ENCODE measurements at regions of chr15 and their contacts with region 1.

Region 1: GRCh38 chr15:31128919-31129768 is 27.6 kb upstream of the TRPM1 start:
- DNase-seq: peak; percentile 88
- ATAC-seq: peak; percentile 91
- H3K4me3 Mint-ChIP-seq: no peak overlapping the region
- H3K27ac Mint-ChIP-seq: no peak overlapping the region
- H3K4me1 Mint-ChIP-seq: peaks cover 4% of the 10 kb centered on the region; the same call in 1 of the 2 replicates
- H3K27me3 Mint-ChIP-seq: no peaks in the 10 kb centered on the region
- CTCF ChIP-seq: peak; percentile 95

Region 2: GRCh38 chr15:30895461-30896210 is 233.5 kb before region 1 on chr15:
- CTCF ChIA-PET with region 1: interaction called, 14 read pairs
- POLR2A ChIA-PET with region 1: no interaction called
- DNase-seq: no peak
- ATAC-seq: no peak
- H3K4me3 Mint-ChIP-seq: no peak overlapping the region
- H3K27ac Mint-ChIP-seq: no peak overlapping the region; the same call in 1 of the 2 replicates
- H3K4me1 Mint-ChIP-seq: peaks cover 17% of the 10 kb centered on the region
- H3K27me3 Mint-ChIP-seq: no peaks in the 10 kb centered on the region
- CTCF ChIP-seq: no peak

Region 3: DNA sequence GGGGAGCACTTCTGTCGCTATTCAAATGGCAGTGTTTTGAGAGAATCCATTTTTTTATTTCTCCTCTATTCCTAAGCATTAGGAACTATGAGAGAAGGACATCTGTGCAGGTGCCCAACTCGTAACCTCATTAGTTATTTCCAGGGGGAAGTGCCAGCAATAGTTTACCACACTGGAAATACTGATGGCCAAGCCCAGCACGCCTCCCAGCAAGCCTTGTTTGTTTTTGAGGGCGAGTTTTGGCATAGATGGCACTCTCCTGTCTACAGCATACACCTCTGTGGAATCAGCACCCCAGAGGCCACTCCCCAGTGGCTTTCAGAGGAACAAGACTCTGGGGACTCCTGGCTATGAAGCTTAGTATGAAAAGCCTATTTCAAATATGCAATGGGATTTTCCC is 188.8 kb before region 1 on chr15:
- CTCF ChIA-PET with region 1: interaction called, 23 read pairs
- POLR2A ChIA-PET with region 1: no interaction called
- DNase-seq: no peak
- ATAC-seq: no peak
- H3K4me3 Mint-ChIP-seq: no peak overlapping the region
- H3K27ac Mint-ChIP-seq: no peak overlapping the region
- H3K4me1 Mint-ChIP-seq: no peaks in the 10 kb centered on the region
- H3K27me3 Mint-ChIP-seq: no peaks in the 10 kb centered on the region
- CTCF ChIP-seq: no peak

Region 4: DNA sequence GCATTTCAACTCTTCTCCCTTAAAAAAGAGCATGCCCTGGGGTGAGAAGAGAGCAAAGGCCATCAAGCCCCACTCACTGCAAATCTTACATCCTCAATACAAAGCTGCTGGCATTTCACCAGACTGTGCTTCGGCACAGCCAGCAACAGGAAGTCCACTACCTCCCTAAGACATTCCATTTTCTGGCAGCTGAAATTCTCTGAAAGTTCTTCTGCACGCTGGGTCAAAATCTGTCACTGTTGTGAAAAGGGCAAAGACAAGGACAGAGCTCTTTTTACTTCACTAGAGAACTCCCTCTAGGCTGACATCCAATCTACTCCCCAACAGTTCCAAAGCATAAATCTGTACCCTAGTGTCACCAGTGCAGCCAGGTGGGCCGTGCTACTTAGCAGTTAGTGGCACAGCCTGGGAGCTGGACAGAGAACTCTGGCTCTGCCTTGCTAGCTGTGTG is 144.0 kb before region 1 on chr15:
- CTCF ChIA-PET with region 1: interaction called, 17 read pairs
- POLR2A ChIA-PET with region 1: no interaction called
- DNase-seq: no peak
- ATAC-seq: no peak
- H3K4me3 Mint-ChIP-seq: no peak overlapping the region
- H3K27ac Mint-ChIP-seq: peak overlapping the region; percentile 13; the same call in 1 of the 2 replicates
- H3K4me1 Mint-ChIP-seq: peaks cover 25% of the 10 kb centered on the region
- H3K27me3 Mint-ChIP-seq: no peaks in the 10 kb centered on the region
- CTCF ChIP-seq: no peak

Region 5: DNA sequence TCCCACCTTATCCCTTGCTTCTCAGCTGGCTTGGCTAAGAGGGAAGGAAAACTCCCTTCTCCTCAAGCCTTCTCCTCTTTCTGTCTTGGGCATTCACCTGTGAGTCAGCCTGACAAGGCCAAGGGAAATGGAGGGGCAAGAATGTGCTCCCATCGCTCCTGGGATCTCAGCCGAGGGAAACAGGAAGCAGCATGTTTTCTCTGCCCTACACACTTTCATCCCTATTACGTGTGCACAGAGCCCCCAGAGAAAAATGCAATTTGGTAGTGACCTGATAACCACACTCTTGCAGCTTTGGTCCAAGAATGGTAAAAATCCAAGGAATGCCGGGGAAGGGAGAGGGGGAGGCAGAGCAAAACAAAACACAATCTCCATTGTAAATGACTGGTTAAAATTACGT is 104.8 kb before region 1 on chr15:
- CTCF ChIA-PET with region 1: interaction called, 20 read pairs
- POLR2A ChIA-PET with region 1: no interaction called
- DNase-seq: peak; percentile 28
- ATAC-seq: peak; percentile 78
- H3K4me3 Mint-ChIP-seq: no peak overlapping the region
- H3K27ac Mint-ChIP-seq: peak overlapping the region; percentile 96
- H3K4me1 Mint-ChIP-seq: peaks cover 33% of the 10 kb centered on the region
- H3K27me3 Mint-ChIP-seq: no peaks in the 10 kb centered on the region
- CTCF ChIP-seq: no peak

Region 6: GRCh38 chr15:31069360-31070000 is 59.7 kb before region 1 on chr15:
- CTCF ChIA-PET with region 1: no interaction called
- POLR2A ChIA-PET with region 1: no interaction called
- DNase-seq: no peak
- ATAC-seq: no peak
- H3K4me3 Mint-ChIP-seq: no peak overlapping the region
- H3K27ac Mint-ChIP-seq: no peak overlapping the region
- H3K4me1 Mint-ChIP-seq: peaks cover 9% of the 10 kb centered on the region
- H3K27me3 Mint-ChIP-seq: no peaks in the 10 kb centered on the region
- CTCF ChIP-seq: no peak

Region 7: GRCh38 chr15:31116423-31117030 is 12.6 kb before region 1 on chr15:
- CTCF ChIA-PET with region 1: interaction called, 25 read pairs
- POLR2A ChIA-PET with region 1: no interaction called
- DNase-seq: no peak
- ATAC-seq: no peak
- H3K4me3 Mint-ChIP-seq: no peak overlapping the region
- H3K27ac Mint-ChIP-seq: no peak overlapping the region
- H3K4me1 Mint-ChIP-seq: no peaks in the 10 kb centered on the region
- H3K27me3 Mint-ChIP-seq: no peaks in the 10 kb centered on the region
- CTCF ChIP-seq: no peak

Region 8: GRCh38 chr15:31488426-31489204 is 359.5 kb after region 1 on chr15:
- CTCF ChIA-PET with region 1: interaction called, 10 read pairs
- POLR2A ChIA-PET with region 1: no interaction called
- DNase-seq: peak; percentile 53
- ATAC-seq: peak; percentile 76
- H3K4me3 Mint-ChIP-seq: no peak overlapping the region
- H3K27ac Mint-ChIP-seq: no peak overlapping the region
- H3K4me1 Mint-ChIP-seq: peaks cover 5% of the 10 kb centered on the region; the same call in 1 of the 2 replicates
- H3K27me3 Mint-ChIP-seq: peaks cover 23% of the 10 kb centered on the region
- CTCF ChIP-seq: peak; percentile 71